ENCODE measurements at regions of chr3 and their contacts with region 1.

Region 1: DNA sequence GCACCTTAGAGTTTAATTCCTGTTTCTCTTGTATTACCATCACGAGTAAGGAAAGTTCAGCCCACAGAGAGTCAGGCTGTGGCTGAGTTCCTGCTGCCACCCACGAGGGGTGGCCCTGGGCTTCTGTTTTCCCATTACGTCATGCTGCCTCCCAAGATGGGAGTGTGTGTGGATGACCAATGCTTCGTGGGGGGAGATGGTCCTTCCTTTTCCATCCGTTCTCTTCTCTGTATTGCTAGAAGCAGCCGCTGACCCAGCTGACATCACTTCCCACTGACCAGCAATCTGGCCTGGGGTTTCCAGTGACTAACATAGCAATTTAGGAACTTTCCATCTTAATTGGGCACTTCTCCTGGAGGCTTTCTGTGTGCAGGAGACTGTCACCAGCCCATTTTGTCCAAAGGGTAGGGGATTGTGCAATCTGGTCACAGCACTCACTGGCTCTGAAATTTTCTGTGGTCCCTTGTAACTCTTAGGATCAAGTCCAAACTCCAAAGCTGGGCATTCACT is 9.3 kb downstream of the IRAK2 start:
- DNase-seq: peak; percentile 56
- H3K4me3 Mint-ChIP-seq: peak overlapping the region; percentile 52
- H3K27ac Mint-ChIP-seq: peak overlapping the region; percentile 87
- H3K4me1 Mint-ChIP-seq: peaks cover 19% of the 10 kb centered on the region
- H3K27me3 Mint-ChIP-seq: no peaks in the 10 kb centered on the region

Region 2: GRCh38 chr3:10185804-10186762 is 12.1 kb after region 1 on chr3:
- intact Hi-C with region 1: loop called (anchors 2 kb)
- DNase-seq: peak; percentile 76
- H3K4me3 Mint-ChIP-seq: peak overlapping the region; percentile 66
- H3K27ac Mint-ChIP-seq: peak overlapping the region; percentile 87
- H3K4me1 Mint-ChIP-seq: peaks cover 46% of the 10 kb centered on the region
- H3K27me3 Mint-ChIP-seq: no peaks in the 10 kb centered on the region

Region 3: DNA sequence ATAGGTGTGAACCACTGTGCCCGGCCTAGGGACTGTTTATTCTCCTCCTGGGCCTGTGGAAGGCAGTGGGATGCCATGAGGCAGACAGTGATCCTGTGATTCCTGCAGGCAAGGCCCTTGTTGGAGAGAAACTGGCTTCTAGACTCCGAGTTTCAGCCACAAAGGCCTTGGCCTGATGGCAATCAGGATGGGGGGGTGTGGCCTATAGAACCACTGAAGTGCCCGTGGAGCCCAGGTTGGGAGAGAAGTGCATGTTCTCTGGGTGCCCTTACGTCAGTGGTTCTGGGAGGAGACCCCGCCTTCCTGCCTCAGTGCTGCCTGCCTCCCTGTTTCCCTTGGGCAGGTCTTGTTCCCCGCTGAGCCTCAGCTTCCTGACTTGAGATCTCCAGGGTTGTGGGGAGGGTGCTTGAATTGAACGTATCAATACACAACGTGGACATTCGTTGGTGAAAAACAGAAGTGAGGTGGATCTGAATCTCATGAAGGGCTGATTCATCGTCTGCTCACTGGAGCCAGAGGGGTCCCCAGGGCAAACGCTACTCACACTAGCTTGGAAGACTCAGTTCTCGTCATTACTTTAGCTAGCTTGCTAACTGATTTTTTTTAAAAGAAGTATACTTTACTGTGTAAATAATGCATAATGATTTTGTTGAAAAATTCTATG is 22.5 kb after region 1 on chr3:
- intact Hi-C with region 1: no loop called
- DNase-seq: peak; percentile 65
- H3K4me3 Mint-ChIP-seq: peak overlapping the region; percentile 6
- H3K27ac Mint-ChIP-seq: peak overlapping the region; percentile 92
- H3K4me1 Mint-ChIP-seq: peaks cover 78% of the 10 kb centered on the region
- H3K27me3 Mint-ChIP-seq: no peaks in the 10 kb centered on the region

Region 4: GRCh38 chr3:10366651-10367101 is 192.7 kb after region 1 on chr3:
- intact Hi-C with region 1: no loop called
- DNase-seq: peak; percentile 74
- H3K4me3 Mint-ChIP-seq: peak overlapping the region; percentile 1
- H3K27ac Mint-ChIP-seq: peak overlapping the region; percentile 39
- H3K4me1 Mint-ChIP-seq: peaks cover 19% of the 10 kb centered on the region
- H3K27me3 Mint-ChIP-seq: peaks cover 8% of the 10 kb centered on the region

Measured in activated CD4-positive, alpha-beta T cell treated with anti-CD3 and anti-CD28 coated beads, Interleukin-2, amount 10 ng/mL, durations not matched to agents 24 days and 14 days (primary cell).